ENCODE measurements at regions of chr18 and their contacts with region 1.

Region 1: GRCh38 chr18:74652392-74652988 is 54.8 kb downstream of the ZNF407 start:
- DNase-seq: no peak
- H3K4me3 Mint-ChIP-seq: no peak overlapping the region
- H3K27ac Mint-ChIP-seq: no peak overlapping the region
- H3K4me1 Mint-ChIP-seq: peaks cover 2% of the 10 kb centered on the region
- H3K27me3 Mint-ChIP-seq: no peaks in the 10 kb centered on the region

Region 2: DNA sequence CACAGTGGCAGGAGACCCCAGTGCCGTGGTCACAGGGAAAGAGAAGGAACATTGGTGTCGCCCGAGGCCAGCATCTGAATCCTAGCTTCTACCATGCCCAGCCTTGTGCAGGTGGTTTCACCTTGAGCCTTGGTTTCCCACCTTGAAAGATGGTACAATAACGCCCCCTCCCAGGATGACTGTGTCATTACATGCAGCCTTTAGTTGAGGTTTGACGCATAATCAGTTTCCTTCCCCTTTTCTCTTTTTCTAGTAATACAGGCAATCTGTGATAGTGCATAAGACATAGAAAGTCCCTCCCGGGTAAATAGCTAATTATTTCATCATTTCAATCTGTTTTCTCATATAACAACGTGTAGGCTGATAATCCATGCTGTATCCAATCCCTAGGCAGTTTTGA is 84.7 kb before region 1 on chr18:
- CTCF ChIA-PET with region 1: no interaction called
- intact Hi-C with region 1: no loop called
- DNase-seq: peak; percentile 10
- H3K4me3 Mint-ChIP-seq: no peak overlapping the region
- H3K27ac Mint-ChIP-seq: no peak overlapping the region
- H3K4me1 Mint-ChIP-seq: no peaks in the 10 kb centered on the region
- H3K27me3 Mint-ChIP-seq: peaks cover 11% of the 10 kb centered on the region

Region 3: GRCh38 chr18:74896390-74896991 is 244.0 kb after region 1 on chr18:
- CTCF ChIA-PET with region 1: no interaction called
- intact Hi-C with region 1: loop called (anchors 5 kb)
- DNase-seq: peak; percentile 67
- H3K4me3 Mint-ChIP-seq: no peak overlapping the region
- H3K27ac Mint-ChIP-seq: no peak overlapping the region
- H3K4me1 Mint-ChIP-seq: peaks cover 2% of the 10 kb centered on the region
- H3K27me3 Mint-ChIP-seq: no peaks in the 10 kb centered on the region

Region 4: DNA sequence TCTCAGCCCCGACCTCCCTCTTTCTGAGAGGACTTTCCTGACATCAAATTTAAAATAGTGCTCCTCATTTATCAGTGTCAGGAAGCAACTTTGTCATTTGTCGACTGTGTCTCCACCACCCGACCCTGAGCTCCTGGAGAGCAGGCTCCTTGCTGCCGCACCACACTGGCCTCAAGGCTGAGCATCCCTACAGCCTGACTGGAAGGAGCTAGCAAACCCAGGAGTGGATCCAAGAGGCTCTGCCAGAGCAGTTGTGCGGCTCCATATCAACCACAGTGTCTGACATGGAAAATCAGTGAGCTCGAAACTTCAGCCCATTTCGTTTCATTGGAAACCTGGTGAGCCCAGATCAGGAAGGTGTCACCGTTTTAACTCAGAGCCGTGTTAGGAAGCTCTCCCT is 431.3 kb after region 1 on chr18:
- CTCF ChIA-PET with region 1: interaction called, 3 read pairs
- intact Hi-C with region 1: loop called (anchors 2 kb)
- DNase-seq: no peak
- H3K4me3 Mint-ChIP-seq: no peak overlapping the region
- H3K27ac Mint-ChIP-seq: no peak overlapping the region
- H3K4me1 Mint-ChIP-seq: no peaks in the 10 kb centered on the region
- H3K27me3 Mint-ChIP-seq: no peaks in the 10 kb centered on the region

Region 5: DNA sequence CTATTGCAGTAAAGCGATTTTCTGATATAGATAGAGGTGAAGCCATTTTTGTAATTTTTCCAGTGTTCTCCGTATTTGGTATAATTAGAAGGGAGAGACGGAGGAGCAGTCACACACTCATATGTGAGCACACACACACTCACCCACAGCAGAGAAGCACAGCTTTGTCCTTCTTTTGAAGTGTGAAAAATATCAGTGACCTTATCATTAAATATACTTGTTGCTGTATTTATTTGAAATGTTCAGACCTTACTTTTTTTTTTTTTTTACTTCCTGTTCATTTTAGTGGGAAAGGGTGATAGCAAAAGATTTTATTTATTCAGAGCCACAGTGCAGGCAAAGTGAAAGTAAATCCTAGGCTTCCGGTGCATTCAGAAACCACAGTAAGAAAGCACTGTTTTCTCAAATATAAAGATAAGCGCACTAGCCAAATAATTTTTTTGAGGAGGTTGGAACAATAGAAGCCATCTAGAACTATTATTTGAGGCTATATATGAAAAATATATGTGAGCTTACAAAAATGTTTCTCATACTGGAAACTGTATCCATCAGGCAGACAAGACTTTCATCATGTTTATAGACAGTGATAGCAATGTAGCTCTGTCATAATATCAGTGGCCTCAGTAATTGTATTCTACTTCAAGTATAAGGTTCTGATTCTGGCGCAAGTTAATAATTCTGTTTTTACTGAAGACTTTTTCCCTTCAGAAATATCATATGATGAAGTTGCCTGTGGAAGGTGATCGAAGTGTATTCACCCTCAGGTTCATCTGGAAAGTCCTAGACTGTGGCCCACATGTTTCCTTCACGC is 595.3 kb after region 1 on chr18:
- CTCF ChIA-PET with region 1: no interaction called
- intact Hi-C with region 1: loop called (anchors 2 kb)
- DNase-seq: peak; percentile 36
- H3K4me3 Mint-ChIP-seq: peak overlapping the region; percentile 77
- H3K27ac Mint-ChIP-seq: peak overlapping the region; percentile 93
- H3K4me1 Mint-ChIP-seq: peaks cover 60% of the 10 kb centered on the region
- H3K27me3 Mint-ChIP-seq: no peaks in the 10 kb centered on the region

Region 6: GRCh38 chr18:75727456-75727855 is 1075.0 kb after region 1 on chr18:
- CTCF ChIA-PET with region 1: no interaction called
- intact Hi-C with region 1: loop called (anchors 1 kb)
- DNase-seq: peak; percentile 66
- H3K4me3 Mint-ChIP-seq: no peak overlapping the region
- H3K27ac Mint-ChIP-seq: no peak overlapping the region
- H3K4me1 Mint-ChIP-seq: no peaks in the 10 kb centered on the region
- H3K27me3 Mint-ChIP-seq: peaks cover 34% of the 10 kb centered on the region

Region 7: GRCh38 chr18:76349067-76349715 is 1696.7 kb after region 1 on chr18:
- CTCF ChIA-PET with region 1: no interaction called
- intact Hi-C with region 1: loop called (anchors 1 kb)
- DNase-seq: peak; percentile 80
- H3K4me3 Mint-ChIP-seq: no peak overlapping the region
- H3K27ac Mint-ChIP-seq: no peak overlapping the region
- H3K4me1 Mint-ChIP-seq: peaks cover 9% of the 10 kb centered on the region
- H3K27me3 Mint-ChIP-seq: peaks cover 7% of the 10 kb centered on the region